A549 (cell line): ENCODE measurements at regions of chr16 and their contacts with region 1.

Region 1: DNA sequence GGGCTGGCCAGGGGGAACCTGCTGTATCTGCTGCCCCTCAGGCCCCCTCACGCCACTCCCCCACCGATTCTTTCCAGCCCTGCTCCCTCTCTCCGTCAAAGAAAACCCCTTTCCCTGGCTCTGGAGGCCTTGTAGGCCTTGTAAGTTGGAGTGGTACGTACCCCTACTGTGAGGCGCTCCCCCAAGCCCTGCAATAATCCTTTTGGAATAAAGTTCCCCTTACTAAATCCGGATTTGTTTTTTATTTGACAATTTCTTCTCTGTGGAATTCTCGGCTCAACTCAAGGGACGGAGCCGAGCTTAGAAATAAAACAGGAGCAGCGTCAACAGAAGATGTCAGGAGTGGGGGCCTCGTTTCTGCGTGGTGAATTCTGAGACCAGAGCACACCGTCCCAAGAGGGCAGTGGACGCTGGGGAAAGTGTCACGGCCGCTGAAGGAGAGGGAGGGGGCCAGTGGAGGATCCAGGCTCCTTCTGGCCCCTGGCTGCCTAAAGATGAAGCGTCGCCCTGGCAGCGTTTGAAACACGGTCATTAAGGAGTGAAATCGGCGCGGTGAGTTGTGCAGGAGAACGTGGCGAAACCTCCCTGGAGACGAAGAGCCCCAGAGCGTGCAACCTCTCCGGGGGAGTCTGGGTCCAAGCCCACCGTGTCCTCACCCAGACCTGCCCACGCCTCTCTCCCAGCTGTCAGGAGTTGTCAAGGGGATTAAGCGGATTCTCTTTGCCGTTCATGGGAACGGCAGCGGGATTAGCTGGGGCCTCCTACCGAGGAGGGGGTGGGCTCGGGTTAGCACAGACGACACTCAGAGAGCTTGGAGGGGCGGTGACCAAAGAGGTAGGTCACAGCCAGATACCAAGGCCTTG is 47.0 kb downstream of the SLC7A5 start:
- DNase-seq: no peak
- ATAC-seq: no peak
- H3K4me3 ChIP-seq: no peak overlapping the region
- H3K27ac ChIP-seq: peak overlapping the region; percentile 97 to 99; a peak in 5 of 6 replicates
- H3K4me1 ChIP-seq: peaks cover 39% of the 10 kb centered on the region
- CTCF ChIP-seq: no peak
- EP300 ChIP-seq: no peak
- POLR2A ChIP-seq: no peak
- RAD21 ChIP-seq: no peak

Region 2: DNA sequence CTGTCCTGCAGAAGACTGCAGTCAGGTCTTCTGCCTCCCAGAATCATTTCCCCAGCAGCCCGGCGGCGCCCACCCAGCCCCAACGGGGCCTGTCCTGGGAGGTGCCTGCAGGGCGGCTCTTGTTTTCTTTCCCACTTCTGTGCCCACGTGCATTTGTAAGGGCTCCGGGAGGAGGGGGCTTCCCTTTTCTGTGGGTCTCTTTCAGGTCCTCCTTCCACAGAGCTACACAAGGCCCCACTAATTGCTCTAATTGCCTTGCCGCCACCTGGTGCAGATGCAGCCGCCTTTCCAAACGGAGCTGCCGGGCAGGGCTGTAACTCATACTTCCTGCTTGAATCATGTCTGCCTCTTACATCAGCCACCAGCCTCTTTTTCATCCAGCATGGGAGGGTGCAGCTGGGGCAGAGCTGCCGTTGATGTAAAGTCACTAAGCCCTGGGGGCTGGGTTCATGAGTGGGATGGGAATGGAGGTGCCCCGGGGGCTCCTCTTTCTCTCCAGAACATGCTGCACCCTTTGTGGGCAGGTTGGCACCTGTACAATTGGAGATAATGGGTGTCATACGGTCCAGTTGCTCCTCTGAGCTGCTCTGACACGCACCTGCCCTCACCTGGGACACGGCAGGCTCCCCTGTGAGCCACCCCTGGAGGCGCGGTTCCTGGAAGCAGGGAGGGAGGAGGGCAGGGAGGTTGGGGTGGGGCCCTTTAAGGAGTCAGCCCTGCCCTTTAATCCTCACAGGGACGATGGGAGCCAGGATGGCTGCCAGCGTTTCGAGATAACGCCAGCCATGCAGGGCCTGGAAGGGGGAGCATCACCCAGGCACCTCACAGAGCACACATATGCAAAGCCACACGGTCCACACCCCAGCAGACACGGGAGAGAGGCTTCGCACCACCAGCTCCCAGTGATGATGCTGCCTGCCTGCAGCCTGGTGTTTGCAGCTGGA is 15.5 kb before region 1 on chr16:
- CTCF ChIA-PET with region 1: interaction called, 22 read pairs
- POLR2A ChIA-PET with region 1: interaction called, 11 read pairs
- DNase-seq: peak; percentile 78 to 85
- ATAC-seq: peak; percentile 78 to 83
- H3K4me3 ChIP-seq: peak overlapping the region; percentile 31
- H3K27ac ChIP-seq: peak overlapping the region; percentile 92 to 97
- H3K4me1 ChIP-seq: peaks cover 45% of the 10 kb centered on the region
- CTCF ChIP-seq: no peak
- EP300 ChIP-seq: peak; percentile 41 to 74; a peak in 2 of 5 replicates
- POLR2A ChIP-seq: peak; percentile 8; the same call in 1 of the 2 replicates
- RAD21 ChIP-seq: peak in 1 of 2 experiments; percentile 33; a peak in 1 of 5 replicates

Region 3: GRCh38 chr16:87877938-87878507 is 55.7 kb after region 1 on chr16:
- CTCF ChIA-PET with region 1: interaction called, 11 read pairs
- POLR2A ChIA-PET with region 1: no interaction called
- DNase-seq: no peak
- ATAC-seq: peak in 1 of 2 experiments; percentile 50; a peak in 3 of 6 replicates
- H3K4me3 ChIP-seq: no peak overlapping the region
- H3K27ac ChIP-seq: no peak overlapping the region
- H3K4me1 ChIP-seq: no peaks in the 10 kb centered on the region
- CTCF ChIP-seq: peak; percentile 14; the same call in 1 of the 3 replicates
- EP300 ChIP-seq: no peak
- POLR2A ChIP-seq: no peak
- RAD21 ChIP-seq: 0 out of 5 replicates have a peak, but pooled peaks have one; percentile 15 to 26